SK-N-SH (cell line): ENCODE measurements at regions of chr7 and their contacts with region 1.

Region 1: GRCh38 chr7:65251851-65252620 is 121.6 kb upstream of the ZNF92 start:
- DNase-seq: peak; percentile 98
- H3K4me3 ChIP-seq: peak overlapping the region; percentile 71 to 80
- H3K27ac ChIP-seq: peak overlapping the region in 1 of 2 experiments; percentile 88; a peak in 2 of 4 replicates
- H3K4me1 ChIP-seq: peaks cover 0 to 13% of the 10 kb centered on the region in 2 experiments; a peak in 1 of 4 replicates
- H3K27me3 ChIP-seq: no peaks in the 10 kb centered on the region; the same call in 1 of the 2 replicates
- CTCF ChIP-seq: no peak
- EP300 ChIP-seq: no peak
- RAD21 ChIP-seq: 0 out of 2 replicates have a peak, but pooled peaks have one; percentile 6

Region 2: GRCh38 chr7:65233409-65234019 is 18.5 kb before region 1 on chr7:
- CTCF ChIA-PET with region 1: interaction called, 10 read pairs
- POLR2A ChIA-PET with region 1: no interaction called
- DNase-seq: no peak
- H3K4me3 ChIP-seq: no peak overlapping the region
- H3K27ac ChIP-seq: no peak overlapping the region
- H3K4me1 ChIP-seq: peaks cover 0 to 14% of the 10 kb centered on the region in 2 experiments; a peak in 2 of 4 replicates
- H3K27me3 ChIP-seq: no peaks in the 10 kb centered on the region
- CTCF ChIP-seq: no peak
- EP300 ChIP-seq: no peak
- RAD21 ChIP-seq: no peak